Activated CD4-positive, alpha-beta T cell treated with anti-CD3 and anti-CD28 coated beads, Interleukin-2, amount 10 ng/mL, durations not matched to agents 24 days and 14 days (primary cell): ENCODE measurements at regions of chr2 and their contacts with region 1.

Region 1: DNA sequence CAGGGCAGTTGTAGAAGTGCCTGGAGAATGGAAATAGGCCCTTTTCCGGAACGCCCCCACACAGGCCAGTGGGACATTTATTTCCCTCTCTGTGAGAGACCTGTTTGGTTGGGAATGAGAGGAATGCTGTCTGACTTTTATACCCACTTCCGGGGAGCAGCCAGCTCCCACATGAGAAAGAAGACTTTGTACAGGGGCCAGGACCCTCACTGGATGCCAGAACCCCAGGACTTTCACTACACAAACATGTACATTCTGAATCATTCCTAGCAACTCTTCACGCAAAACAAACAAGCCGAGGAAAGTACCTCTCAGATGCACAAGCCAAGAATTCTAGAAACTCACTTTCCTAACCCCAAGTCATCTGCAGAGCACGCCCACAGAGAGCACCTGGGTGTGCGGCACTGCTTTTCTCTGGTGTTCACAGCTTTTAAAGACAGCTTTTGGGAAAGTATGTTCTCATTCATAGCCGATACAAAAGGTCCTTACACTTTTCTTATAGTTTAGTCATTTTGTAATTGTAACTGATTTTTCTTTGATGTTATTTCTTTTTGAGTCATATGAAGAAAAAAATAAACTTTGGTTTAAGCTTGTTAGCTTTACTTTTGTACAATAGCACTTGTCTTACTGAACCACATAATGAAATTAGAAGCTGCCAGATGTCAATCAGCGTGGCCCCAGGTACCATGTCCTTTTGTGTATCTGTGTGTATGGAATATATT is 856.1 kb upstream of the ID2 start:
- DNase-seq: peak; percentile 83
- H3K4me3 Mint-ChIP-seq: peak overlapping the region; percentile 47
- H3K27ac Mint-ChIP-seq: peak overlapping the region; percentile 96
- H3K4me1 Mint-ChIP-seq: peaks cover 28% of the 10 kb centered on the region
- H3K27me3 Mint-ChIP-seq: no peaks in the 10 kb centered on the region

Region 2: GRCh38 chr2:7450188-7450832 is 375.4 kb before region 1 on chr2:
- intact Hi-C with region 1: loop called (anchors 2 kb)
- DNase-seq: peak; percentile 90
- H3K4me3 Mint-ChIP-seq: peak overlapping the region; percentile 58
- H3K27ac Mint-ChIP-seq: peak overlapping the region; percentile 100
- H3K4me1 Mint-ChIP-seq: peaks cover 70% of the 10 kb centered on the region
- H3K27me3 Mint-ChIP-seq: no peaks in the 10 kb centered on the region

Region 3: GRCh38 chr2:7692657-7693161 is 133.0 kb before region 1 on chr2:
- intact Hi-C with region 1: loop called (anchors 1 kb)
- DNase-seq: no peak
- H3K4me3 Mint-ChIP-seq: peak overlapping the region; percentile 68
- H3K27ac Mint-ChIP-seq: peak overlapping the region; percentile 91
- H3K4me1 Mint-ChIP-seq: peaks cover 42% of the 10 kb centered on the region
- H3K27me3 Mint-ChIP-seq: no peaks in the 10 kb centered on the region

Region 4: DNA sequence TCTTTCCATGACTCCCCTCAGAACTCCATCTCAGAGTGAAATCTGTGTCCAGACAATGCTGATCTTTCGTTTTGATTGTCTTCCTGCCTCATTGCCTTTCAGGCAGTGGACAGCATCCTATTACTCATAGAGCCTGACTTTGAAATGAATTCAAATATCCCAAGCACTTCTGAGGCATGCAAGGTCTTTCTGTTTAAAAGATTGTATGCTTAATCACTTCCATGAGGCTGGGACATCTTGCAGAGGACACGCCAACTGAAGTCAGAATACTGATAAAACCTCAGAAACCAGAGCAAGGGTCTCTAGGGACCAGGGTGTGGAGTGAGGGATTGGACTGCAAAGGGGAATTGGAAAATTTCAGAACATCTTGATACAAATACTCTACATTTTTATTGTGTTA is 19.6 kb after region 1 on chr2:
- intact Hi-C with region 1: loop called (anchors 1 kb)
- DNase-seq: peak; percentile 52
- H3K4me3 Mint-ChIP-seq: no peak overlapping the region
- H3K27ac Mint-ChIP-seq: peak overlapping the region; percentile 76
- H3K4me1 Mint-ChIP-seq: peaks cover 42% of the 10 kb centered on the region
- H3K27me3 Mint-ChIP-seq: no peaks in the 10 kb centered on the region

Region 5: DNA sequence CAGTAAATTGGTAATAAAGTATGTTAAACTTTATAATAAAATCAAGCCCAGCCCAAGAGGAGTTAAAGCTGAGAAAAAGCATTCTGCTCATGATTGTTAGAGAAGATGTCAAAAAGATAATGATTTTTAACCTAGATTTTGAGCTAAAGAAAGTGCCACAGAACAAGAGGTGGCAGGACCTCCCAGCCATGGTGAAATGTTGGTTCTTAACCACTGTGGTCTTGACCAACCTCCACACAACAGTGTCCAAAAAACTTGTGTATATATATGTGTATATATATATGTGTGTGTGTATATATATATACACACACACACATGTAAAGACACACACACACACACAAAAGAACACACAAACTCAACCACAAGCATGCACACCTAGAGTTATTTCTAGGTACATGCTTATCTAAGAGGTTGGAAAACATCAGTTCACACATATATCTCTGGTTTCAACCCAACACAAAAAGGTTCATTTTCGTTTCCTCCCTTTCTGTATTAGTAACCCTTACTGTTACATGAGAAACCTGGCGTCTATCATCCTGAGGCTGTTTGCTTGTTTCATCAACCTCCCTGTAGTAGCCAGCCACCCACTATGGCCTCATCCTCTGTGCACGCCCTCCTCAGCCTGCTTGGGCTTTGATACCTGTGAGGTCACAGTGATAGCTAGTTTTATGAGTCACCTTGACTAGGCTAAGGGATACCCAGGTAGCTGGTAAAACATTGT is 224.3 kb after region 1 on chr2:
- intact Hi-C with region 1: loop called (anchors 1 kb)
- DNase-seq: peak; percentile 81
- H3K4me3 Mint-ChIP-seq: peak overlapping the region; percentile 7
- H3K27ac Mint-ChIP-seq: peak overlapping the region; percentile 84
- H3K4me1 Mint-ChIP-seq: peaks cover 23% of the 10 kb centered on the region
- H3K27me3 Mint-ChIP-seq: no peaks in the 10 kb centered on the region

Region 6: GRCh38 chr2:8303322-8303832 is 477.6 kb after region 1 on chr2:
- intact Hi-C with region 1: loop called (anchors 5 kb)
- DNase-seq: peak; percentile 94
- H3K4me3 Mint-ChIP-seq: peak overlapping the region; percentile 71
- H3K27ac Mint-ChIP-seq: peak overlapping the region; percentile 83
- H3K4me1 Mint-ChIP-seq: peaks cover 72% of the 10 kb centered on the region
- H3K27me3 Mint-ChIP-seq: no peaks in the 10 kb centered on the region